BJ (cell line): ENCODE measurements at regions of chr10 and their contacts with region 1.

Region 1: DNA sequence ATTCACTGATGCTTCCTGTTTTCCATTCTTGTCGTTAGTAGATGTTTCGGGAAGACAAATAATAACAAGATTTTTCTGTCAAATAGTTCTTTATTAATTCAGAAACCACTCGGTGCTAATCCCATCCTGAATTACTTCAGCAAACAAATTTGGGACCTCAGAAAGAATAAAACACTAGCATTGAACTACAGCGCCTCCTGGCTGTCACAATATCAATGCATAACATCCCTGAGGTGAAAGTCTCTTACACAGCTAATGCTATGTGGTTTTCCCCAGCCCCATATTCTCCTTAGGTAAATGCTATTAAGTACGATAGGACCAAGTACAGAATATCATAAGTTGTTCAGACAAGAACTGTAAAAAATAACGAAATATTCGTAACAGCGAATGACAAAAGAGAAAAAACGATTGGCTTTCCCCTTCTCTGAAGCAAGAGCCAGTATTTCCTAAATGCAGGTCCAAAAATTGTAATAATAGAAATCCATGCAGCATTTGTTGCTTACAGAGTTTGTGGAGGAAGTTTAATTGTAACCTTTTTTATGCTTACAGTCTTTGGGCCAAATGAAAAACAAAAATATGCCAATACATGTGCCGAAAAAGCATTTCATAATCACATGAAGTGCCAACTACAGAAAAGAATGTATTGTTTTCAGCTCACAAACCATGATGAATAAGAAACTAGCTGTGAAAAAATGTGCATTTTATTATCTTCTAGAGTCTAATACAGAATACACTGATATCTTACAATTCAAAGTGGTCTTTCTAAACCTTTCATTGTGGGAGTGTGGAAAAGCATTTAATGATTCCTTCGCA is 47.3 kb downstream of the MYPN start:
- DNase-seq: no peak
- H3K4me3 ChIP-seq: no peak overlapping the region
- H3K27me3 ChIP-seq: no peaks in the 10 kb centered on the region
- CTCF ChIP-seq: peak; percentile 79

Region 2: DNA sequence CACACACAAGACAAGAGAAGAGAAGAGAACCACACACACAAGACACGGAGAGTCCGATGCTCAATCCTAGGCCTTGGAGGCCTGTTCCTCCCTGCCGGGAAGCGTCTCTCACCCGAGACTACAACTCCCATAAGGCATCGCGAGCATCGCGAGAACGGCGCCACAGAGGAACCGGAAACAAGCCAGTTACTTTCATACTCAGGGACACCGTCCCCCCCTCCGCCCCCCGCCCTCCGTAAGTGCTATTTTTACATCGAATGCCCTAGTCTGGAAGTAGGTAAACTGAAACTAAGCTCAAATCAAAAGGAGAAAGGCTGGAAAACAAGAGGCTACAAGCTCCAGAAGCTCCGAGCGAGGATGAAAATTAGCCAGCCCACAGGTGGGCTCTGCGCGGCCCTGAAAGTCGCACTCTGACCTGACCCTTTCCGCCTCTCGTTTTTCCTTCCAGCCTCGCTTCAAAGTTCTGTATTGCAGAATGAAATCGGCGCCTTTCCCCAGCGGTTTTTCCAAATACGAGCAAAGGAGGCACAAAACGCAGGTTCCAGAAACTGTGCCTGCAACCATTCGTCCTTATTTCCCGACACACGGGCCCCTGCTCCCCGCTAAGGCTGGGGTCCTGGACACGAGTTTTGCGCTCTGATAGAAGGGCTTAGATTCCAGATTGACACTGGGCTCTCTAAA is 307.1 kb before region 1 on chr10:
- CTCF ChIA-PET with region 1: interaction called, 20 read pairs
- POLR2A ChIA-PET with region 1: no interaction called
- DNase-seq: peak; percentile 72
- H3K4me3 ChIP-seq: peak overlapping the region; percentile 56
- H3K27me3 ChIP-seq: no peaks in the 10 kb centered on the region
- CTCF ChIP-seq: no peak

Region 3: GRCh38 chr10:68073631-68074403 is 82.8 kb before region 1 on chr10:
- CTCF ChIA-PET with region 1: interaction called, 17 read pairs
- POLR2A ChIA-PET with region 1: no interaction called
- DNase-seq: no peak
- H3K4me3 ChIP-seq: peak overlapping the region; percentile 99
- H3K27me3 ChIP-seq: no peaks in the 10 kb centered on the region
- CTCF ChIP-seq: no peak

Region 4: DNA sequence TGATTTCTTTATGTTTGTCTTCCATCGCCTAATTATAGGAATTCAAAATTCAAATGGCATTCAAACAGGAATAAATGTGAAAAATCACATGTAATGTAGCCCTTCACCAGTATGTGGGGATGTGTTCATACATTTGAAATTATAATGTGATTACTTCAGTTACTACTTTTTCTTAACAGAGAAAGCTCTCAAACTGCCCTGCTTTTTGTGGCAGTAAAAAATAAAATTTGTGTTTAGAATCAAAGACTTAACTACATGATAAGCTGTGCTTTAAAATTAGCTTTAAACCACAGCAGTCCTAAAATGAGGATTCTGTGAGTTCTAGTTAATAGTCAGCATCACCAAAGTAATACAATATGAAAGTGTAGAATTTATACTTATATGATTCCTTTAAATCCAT is 73.7 kb before region 1 on chr10:
- CTCF ChIA-PET with region 1: interaction called, 146 read pairs
- POLR2A ChIA-PET with region 1: interaction called, 5 read pairs
- DNase-seq: no peak
- H3K4me3 ChIP-seq: no peak overlapping the region
- H3K27me3 ChIP-seq: no peaks in the 10 kb centered on the region
- CTCF ChIP-seq: peak; percentile 55

Region 5: DNA sequence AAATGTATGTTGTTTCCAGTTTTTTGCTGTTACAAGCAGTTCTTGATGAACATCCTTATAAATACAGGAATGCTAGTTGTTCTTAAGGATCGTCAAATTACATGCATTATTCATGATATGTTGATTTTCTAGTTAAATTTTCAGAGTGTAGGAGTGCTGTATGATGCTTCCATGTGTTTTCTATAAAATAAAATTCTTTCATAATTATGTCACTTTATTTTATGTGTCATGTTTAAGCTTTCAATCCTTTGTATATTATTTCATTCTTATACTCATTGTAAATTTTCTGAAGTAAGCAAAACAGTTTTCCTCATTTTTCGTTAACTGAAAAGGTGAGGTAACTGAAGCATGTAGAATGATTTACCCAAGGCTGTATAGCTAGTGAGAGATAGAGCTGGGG is 64.1 kb before region 1 on chr10:
- CTCF ChIA-PET with region 1: interaction called, 146 read pairs
- POLR2A ChIA-PET with region 1: no interaction called
- DNase-seq: no peak
- H3K4me3 ChIP-seq: no peak overlapping the region
- H3K27me3 ChIP-seq: no peaks in the 10 kb centered on the region
- CTCF ChIP-seq: no peak

Region 6: GRCh38 chr10:68132391-68132790 is 24.2 kb before region 1 on chr10:
- CTCF ChIA-PET with region 1: no interaction called
- POLR2A ChIA-PET with region 1: no interaction called
- DNase-seq: no peak
- H3K4me3 ChIP-seq: no peak overlapping the region
- H3K27me3 ChIP-seq: no peaks in the 10 kb centered on the region
- CTCF ChIP-seq: no peak

Region 7: GRCh38 chr10:68196701-68197100 is 40.1 kb after region 1 on chr10:
- CTCF ChIA-PET with region 1: no interaction called
- POLR2A ChIA-PET with region 1: no interaction called
- DNase-seq: no peak
- H3K4me3 ChIP-seq: no peak overlapping the region
- H3K27me3 ChIP-seq: no peaks in the 10 kb centered on the region
- CTCF ChIP-seq: no peak

Region 8: DNA sequence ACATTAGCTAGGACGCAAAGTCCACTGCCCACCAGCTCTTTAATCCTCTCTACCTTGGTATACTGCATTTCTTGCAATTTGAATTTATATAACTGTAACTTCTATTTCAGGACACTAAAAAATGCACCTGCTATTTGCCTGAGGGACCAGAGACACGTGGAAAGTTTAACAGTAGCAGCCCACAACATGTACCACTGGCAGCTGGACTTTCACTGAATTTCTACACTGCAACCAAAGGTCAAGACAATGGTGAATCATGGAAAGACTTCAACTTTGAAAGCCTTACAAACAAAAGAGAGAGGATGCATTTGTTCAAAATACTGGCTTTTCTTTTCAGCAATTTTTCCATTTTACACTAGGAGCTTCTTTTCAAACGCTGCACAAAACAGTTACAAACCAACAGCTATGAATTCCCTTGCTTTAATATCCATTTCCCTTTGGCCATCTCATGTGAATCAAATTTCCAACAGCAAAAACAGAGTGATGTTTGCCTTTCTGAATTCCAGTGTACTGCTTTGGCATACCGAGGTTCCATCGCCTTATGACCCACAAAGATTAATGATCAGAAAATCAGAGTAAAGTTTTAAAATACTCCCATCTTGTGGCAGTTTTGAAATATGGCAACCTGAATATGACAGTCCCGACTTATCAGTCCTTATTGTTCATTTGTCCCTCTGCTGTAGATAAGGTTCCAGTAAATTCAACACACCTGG is 145.4 kb after region 1 on chr10:
- CTCF ChIA-PET with region 1: interaction called, 11 read pairs
- POLR2A ChIA-PET with region 1: no interaction called
- DNase-seq: peak; percentile 24
- H3K4me3 ChIP-seq: no peak overlapping the region
- H3K27me3 ChIP-seq: no peaks in the 10 kb centered on the region
- CTCF ChIP-seq: peak; percentile 50